ENCODE measurements at regions of chr11 and their contacts with region 1.

Region 1: DNA sequence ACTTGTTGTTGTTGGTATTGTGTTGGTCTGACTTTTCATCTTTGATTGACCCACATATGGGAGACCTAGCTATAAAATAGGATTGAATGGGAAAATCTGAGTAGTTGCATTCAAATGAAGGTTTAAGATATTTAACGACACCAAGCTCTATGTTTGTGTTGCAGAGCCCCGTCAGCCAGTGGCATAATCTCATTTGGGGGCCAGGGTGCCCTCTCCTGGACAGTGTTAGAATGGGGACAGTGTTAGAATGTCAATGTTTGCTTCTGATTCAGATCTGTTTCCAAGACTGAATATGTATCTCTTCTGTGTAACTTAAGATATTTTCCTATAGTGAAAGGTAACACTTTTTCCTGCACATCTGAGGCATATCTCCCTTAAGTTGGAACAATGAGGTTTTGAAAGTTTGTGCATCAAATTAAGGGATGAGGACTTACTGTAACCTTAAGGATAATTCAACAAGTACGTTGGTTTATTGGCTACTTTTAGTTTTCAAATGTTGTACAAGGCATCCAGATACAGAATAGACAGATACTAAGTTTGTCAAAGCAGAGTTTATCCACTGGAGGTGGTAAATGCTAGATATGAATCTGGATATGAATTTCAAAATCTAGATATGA is 5.3 kb upstream of the OR52M1 start:
- DNase-seq: peak; percentile 51
- H3K4me3 ChIP-seq: no peak overlapping the region
- H3K27ac ChIP-seq: no peak overlapping the region
- H3K4me1 ChIP-seq: peaks cover 9% of the 10 kb centered on the region
- H3K27me3 ChIP-seq: peaks cover 2% of the 10 kb centered on the region in 2 experiments
- CTCF ChIP-seq: peak; percentile 48 to 79
- POLR2A ChIP-seq: no peak

Region 2: DNA sequence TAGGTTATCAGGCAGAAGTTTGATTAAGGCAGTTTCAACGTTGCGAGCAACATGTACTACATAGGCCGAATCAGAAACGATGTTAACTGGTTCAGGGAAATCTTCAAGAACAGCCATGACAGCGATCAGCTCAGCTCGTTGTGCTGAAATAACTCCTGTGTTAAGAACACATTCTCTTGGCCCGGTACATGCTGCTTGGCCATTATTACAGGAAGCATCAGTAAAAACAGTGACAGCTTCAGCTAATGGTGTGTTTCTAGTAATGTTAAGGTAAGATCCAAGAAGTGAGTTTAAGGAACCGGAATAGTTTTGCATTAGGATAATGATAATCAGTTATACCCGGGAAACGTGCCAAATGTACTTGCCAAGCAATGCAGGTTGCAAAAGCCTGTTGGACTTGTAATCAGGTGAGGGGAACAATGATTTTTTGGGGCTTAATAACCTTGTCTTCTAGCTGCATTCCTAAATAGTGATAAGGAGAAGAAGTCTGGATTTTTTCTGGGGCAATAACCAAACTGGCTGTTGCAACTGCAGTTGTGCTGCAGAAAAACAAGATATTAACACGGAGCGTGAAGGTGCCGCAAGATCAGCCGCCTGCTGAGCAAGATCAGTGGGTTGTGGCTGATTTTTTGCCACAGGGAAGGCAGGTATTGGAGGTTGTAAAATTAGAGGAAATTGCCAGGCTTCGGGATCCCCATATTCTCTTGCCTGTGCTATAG is 43.0 kb before region 1 on chr11:
- CTCF ChIA-PET with region 1: interaction called, 16 read pairs
- POLR2A ChIA-PET with region 1: no interaction called
- dilution Hi-C with region 1: no loop called
- intact Hi-C with region 1: no loop called
- DNase-seq: no peak
- H3K4me3 ChIP-seq: no peak overlapping the region
- H3K27ac ChIP-seq: no peak overlapping the region
- H3K4me1 ChIP-seq: no peaks in the 10 kb centered on the region
- H3K27me3 ChIP-seq: peaks cover 18 to 23% of the 10 kb centered on the region in 2 experiments
- CTCF ChIP-seq: no peak
- POLR2A ChIP-seq: no peak

Region 3: DNA sequence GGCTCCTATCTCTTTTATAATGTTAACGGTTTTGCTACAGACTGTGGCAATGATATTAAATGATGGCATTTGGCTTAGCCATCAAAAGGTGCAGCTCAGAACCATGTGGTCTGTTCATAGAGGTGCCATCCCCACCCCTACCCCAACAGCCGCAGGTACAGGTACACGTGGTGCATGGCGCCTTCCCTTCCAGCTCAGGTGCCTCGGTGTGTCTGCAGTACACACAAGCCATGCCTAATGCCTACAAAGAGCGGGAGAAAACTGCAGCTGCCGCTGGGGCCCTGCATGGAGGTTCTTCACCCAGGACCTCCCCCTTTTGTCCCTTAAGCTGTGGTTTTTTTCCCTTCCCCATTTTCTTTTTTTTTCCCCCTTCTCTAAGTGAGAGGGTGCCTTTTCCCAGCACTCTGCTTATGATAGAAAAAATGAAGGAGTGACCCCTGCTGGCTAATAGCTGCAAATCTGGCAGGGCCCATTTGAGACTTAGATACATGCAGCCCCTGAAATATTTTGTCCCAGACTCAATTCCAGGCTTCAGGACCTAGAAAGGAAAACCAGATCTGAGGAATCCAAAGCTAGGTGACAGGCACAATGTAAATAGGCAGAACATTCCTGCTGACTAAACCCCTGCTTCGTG is 11.8 kb after region 1 on chr11:
- CTCF ChIA-PET with region 1: interaction called, 12 read pairs
- POLR2A ChIA-PET with region 1: no interaction called
- dilution Hi-C with region 1: no loop called
- intact Hi-C with region 1: no loop called
- DNase-seq: peak; percentile 14
- H3K4me3 ChIP-seq: no peak overlapping the region
- H3K27ac ChIP-seq: no peak overlapping the region
- H3K4me1 ChIP-seq: no peaks in the 10 kb centered on the region
- H3K27me3 ChIP-seq: no peaks in the 10 kb centered on the region
- CTCF ChIP-seq: peak; percentile 32 to 40
- POLR2A ChIP-seq: no peak

Region 4: GRCh38 chr11:4672470-4672869 is 132.8 kb after region 1 on chr11:
- CTCF ChIA-PET with region 1: no interaction called
- POLR2A ChIA-PET with region 1: no interaction called
- dilution Hi-C with region 1: no loop called
- intact Hi-C with region 1: no loop called
- DNase-seq: no peak
- H3K4me3 ChIP-seq: no peak overlapping the region
- H3K27ac ChIP-seq: no peak overlapping the region
- H3K4me1 ChIP-seq: no peaks in the 10 kb centered on the region
- H3K27me3 ChIP-seq: no peaks in the 10 kb centered on the region
- CTCF ChIP-seq: no peak
- POLR2A ChIP-seq: no peak

Region 5: GRCh38 chr11:5210376-5210885 is 670.7 kb after region 1 on chr11:
- CTCF ChIA-PET with region 1: no interaction called
- POLR2A ChIA-PET with region 1: no interaction called
- dilution Hi-C with region 1: no loop called
- intact Hi-C with region 1: no loop called
- DNase-seq: no peak
- H3K4me3 ChIP-seq: no peak overlapping the region
- H3K27ac ChIP-seq: no peak overlapping the region
- H3K4me1 ChIP-seq: no peaks in the 10 kb centered on the region
- H3K27me3 ChIP-seq: no peaks in the 10 kb centered on the region
- CTCF ChIP-seq: no peak
- POLR2A ChIP-seq: no peak